ENCODE measurements at regions of chr4 and their contacts with region 1.

Region 1: DNA sequence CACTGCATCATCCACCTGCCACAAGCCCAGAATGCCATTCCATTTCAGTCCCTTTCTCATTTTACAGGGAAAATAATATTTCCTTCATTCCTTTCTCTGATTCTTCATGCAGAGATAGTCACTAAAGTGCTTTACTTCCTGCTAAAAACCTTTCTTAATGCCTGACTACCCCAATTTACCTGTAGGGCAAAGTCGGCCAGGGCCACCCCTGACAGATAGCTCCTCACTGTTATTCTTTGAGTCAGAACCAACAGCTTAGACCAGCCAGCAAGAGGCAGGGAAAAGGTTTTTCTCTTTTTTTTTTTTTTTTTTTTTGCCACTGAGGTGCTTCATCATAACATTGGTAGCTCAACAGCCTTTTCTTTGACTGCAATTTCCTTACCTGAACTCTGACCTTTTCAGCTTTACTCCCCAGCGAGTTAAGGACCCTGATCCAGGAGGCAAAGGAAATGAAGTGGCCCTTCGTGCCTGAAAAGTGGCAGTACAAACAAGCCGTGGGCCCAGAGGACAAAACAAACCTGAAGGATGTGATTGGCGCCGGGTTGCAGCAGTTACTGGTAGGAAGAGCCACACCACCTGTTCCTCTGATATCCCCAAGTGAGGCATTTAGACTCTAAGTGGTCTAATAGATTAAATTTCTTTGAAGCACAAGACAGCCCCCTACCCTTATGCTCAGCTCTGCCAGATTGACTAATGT is 85.0 kb downstream of the ALPK1 start:
- DNase-seq: no peak
- ATAC-seq: no peak
- H3K4me3 ChIP-seq: no peak overlapping the region
- H3K27ac ChIP-seq: no peak overlapping the region
- H3K4me1 ChIP-seq: 0 out of 2 replicates have a peak, but pooled peaks cover 2% of the 10 kb centered on the region
- H3K27me3 ChIP-seq: no peaks in the 10 kb centered on the region
- CTCF ChIP-seq: no peak
- EP300 ChIP-seq: no peak
- POLR2A ChIP-seq: no peak
- RAD21 ChIP-seq: no peak

Region 2: GRCh38 chr4:112147697-112148096 is 234.4 kb before region 1 on chr4:
- CTCF ChIA-PET with region 1: no interaction called
- POLR2A ChIA-PET with region 1: no interaction called
- RAD21 ChIA-PET with region 1: no interaction called
- SMC1A ChIA-PET with region 1: no interaction called
- in situ Hi-C with region 1: no loop called
- intact Hi-C with region 1: no loop called
- DNase-seq: no peak
- ATAC-seq: no peak
- H3K4me3 ChIP-seq: no peak overlapping the region
- H3K27ac ChIP-seq: no peak overlapping the region
- H3K4me1 ChIP-seq: peaks cover 5% of the 10 kb centered on the region; the same call in 1 of the 2 replicates
- H3K27me3 ChIP-seq: peaks cover 0 to 2% of the 10 kb centered on the region in 2 experiments; a peak in 2 of 4 replicates
- CTCF ChIP-seq: no peak
- EP300 ChIP-seq: no peak
- POLR2A ChIP-seq: no peak
- RAD21 ChIP-seq: no peak

Region 3: DNA sequence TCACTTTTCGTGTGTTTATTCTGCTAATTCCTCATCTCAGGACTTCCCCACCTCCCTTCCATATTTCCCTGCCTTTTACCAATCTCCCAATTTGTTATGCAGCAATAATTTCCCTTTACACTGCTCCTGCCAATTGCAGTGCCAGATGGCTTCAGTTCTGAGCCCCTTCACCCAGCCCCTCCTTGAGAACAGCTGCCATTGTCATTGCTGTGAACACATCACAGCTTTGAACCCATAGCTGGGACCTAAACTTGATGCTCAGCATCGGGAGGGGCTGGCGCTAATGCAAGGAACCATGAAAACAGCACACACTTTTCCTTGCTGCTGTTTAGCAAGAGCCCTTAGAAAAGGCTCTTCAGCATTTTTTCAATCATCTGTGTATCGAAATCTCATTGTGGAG is 20.0 kb after region 1 on chr4:
- CTCF ChIA-PET with region 1: interaction called, 10 read pairs
- POLR2A ChIA-PET with region 1: no interaction called
- RAD21 ChIA-PET with region 1: no interaction called
- SMC1A ChIA-PET with region 1: interaction called, 9 read pairs
- in situ Hi-C with region 1: no loop called
- intact Hi-C with region 1: no loop called
- DNase-seq: no peak
- ATAC-seq: no peak
- H3K4me3 ChIP-seq: no peak overlapping the region
- H3K27ac ChIP-seq: no peak overlapping the region
- H3K4me1 ChIP-seq: no peaks in the 10 kb centered on the region
- H3K27me3 ChIP-seq: no peaks in the 10 kb centered on the region
- CTCF ChIP-seq: no peak
- EP300 ChIP-seq: no peak
- POLR2A ChIP-seq: no peak
- RAD21 ChIP-seq: no peak

Region 4: DNA sequence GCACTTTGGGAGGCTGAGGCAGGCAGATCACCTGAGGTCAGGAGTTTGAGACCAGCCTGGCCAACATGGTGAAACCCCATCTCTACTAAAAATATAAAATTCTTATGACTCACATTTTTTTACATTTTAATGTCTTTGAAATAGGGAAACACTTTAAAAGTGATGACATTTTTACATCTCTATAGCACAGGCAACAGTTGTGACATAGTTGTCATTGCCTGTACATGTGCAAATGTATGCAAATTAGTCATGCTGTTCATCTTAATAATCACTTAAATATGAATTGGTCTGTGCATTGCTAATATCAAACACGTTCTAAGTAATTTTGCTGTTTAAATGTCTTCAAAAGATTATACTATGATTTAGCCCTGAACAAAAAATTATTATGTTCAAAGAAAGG is 212.8 kb after region 1 on chr4:
- CTCF ChIA-PET with region 1: no interaction called
- POLR2A ChIA-PET with region 1: no interaction called
- RAD21 ChIA-PET with region 1: no interaction called
- SMC1A ChIA-PET with region 1: no interaction called
- in situ Hi-C with region 1: no loop called
- intact Hi-C with region 1: no loop called
- DNase-seq: no peak
- ATAC-seq: no peak
- H3K4me3 ChIP-seq: no peak overlapping the region
- H3K27ac ChIP-seq: no peak overlapping the region
- H3K4me1 ChIP-seq: peaks cover 3% of the 10 kb centered on the region; the same call in 1 of the 2 replicates
- H3K27me3 ChIP-seq: no peaks in the 10 kb centered on the region
- CTCF ChIP-seq: no peak
- EP300 ChIP-seq: no peak
- POLR2A ChIP-seq: no peak
- RAD21 ChIP-seq: no peak